SK-N-SH (cell line): ENCODE measurements at regions of chr5 and their contacts with region 1.

Region 1: DNA sequence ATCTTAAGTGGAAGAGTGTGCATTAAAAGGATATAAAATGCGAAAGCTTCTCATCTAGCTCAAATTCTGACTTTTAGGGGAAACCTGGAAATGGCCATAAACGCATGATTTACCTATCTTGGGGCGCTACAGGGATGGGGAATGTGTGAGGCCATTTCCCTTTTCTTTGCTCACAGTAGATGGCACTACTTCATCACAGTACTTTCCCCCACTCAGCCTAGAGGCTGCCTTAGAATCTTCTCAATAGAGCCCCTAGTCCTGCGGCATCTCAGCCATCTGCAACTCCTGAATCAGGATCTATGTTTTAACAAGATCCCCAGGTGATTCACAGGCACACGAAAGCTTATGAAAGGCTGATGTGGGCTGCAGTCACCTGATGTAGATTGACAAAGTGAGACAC is 110.8 kb downstream of the LHFPL2 start:
- DNase-seq: peak; percentile 58
- H3K4me3 ChIP-seq: no peak overlapping the region
- H3K27ac ChIP-seq: peak overlapping the region in 1 of 2 experiments; percentile 97; a peak in 1 of 4 replicates
- H3K4me1 ChIP-seq: peaks cover 7 to 33% of the 10 kb centered on the region in 2 experiments; a peak in 3 of 4 replicates
- H3K27me3 ChIP-seq: no peaks in the 10 kb centered on the region
- CTCF ChIP-seq: peak; percentile 58
- EP300 ChIP-seq: no peak
- RAD21 ChIP-seq: peak; percentile 90

Region 2: GRCh38 chr5:78490709-78491485 is 46.9 kb before region 1 on chr5:
- CTCF ChIA-PET with region 1: interaction called, 10 read pairs
- POLR2A ChIA-PET with region 1: no interaction called
- DNase-seq: no peak
- H3K4me3 ChIP-seq: no peak overlapping the region
- H3K27ac ChIP-seq: peak overlapping the region; percentile 43 to 59
- H3K4me1 ChIP-seq: peaks cover 0 to 14% of the 10 kb centered on the region in 2 experiments; a peak in 1 of 4 replicates
- H3K27me3 ChIP-seq: no peaks in the 10 kb centered on the region
- CTCF ChIP-seq: no peak
- EP300 ChIP-seq: 0 out of 4 replicates have a peak, but pooled peaks of 1 of the 2 experiments have one; percentile 31
- RAD21 ChIP-seq: no peak

Region 3: DNA sequence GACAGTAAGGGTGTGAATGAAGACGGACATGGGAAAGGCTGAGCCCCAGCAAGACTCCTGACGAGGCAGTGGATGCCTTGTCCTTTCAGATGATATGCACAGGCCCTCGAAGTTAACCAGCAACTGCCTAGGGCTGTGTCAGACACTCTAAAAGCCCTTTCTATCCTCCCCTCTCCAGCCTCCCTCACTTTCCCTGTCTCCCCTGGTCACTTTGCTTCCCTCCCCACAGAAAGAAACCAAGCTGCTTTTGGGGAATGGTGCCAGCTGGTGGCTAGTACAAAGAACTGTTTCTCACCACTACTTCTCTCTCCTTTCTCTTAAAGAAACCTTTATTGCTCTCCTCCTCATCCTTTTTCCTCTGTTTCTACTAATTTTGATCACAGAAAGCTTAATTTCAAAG is 89.4 kb after region 1 on chr5:
- CTCF ChIA-PET with region 1: interaction called, 32 read pairs
- POLR2A ChIA-PET with region 1: no interaction called
- DNase-seq: no peak
- H3K4me3 ChIP-seq: no peak overlapping the region
- H3K27ac ChIP-seq: peak overlapping the region; percentile 35 to 56; a peak in 3 of 4 replicates
- H3K4me1 ChIP-seq: peaks cover 23 to 42% of the 10 kb centered on the region in 2 experiments
- H3K27me3 ChIP-seq: no peaks in the 10 kb centered on the region
- CTCF ChIP-seq: peak; percentile 49
- EP300 ChIP-seq: no peak
- RAD21 ChIP-seq: peak; percentile 68

Region 4: GRCh38 chr5:78648359-78649210 is 110.8 kb after region 1 on chr5 and contains the start of gene LHFPL2:
- CTCF ChIA-PET with region 1: interaction called, 23 read pairs
- POLR2A ChIA-PET with region 1: no interaction called
- DNase-seq: peak; percentile 95
- H3K4me3 ChIP-seq: peak within 1 kb of the TSS; percentile 89 to 90
- H3K27ac ChIP-seq: peak within 1 kb of the TSS; percentile 92 to 93
- H3K4me1 ChIP-seq: peaks cover 11 to 26% of the 10 kb centered on the region in 2 experiments
- H3K27me3 ChIP-seq: no peaks in the 10 kb centered on the region
- CTCF ChIP-seq: no peak
- EP300 ChIP-seq: no peak
- RAD21 ChIP-seq: peak; percentile 14; the same call in 1 of the 2 replicates
- polyA plus RNA-seq, gene LHFPL2: 8.6 and 10.4 TPM in 2 replicates

Region 5: GRCh38 chr5:78920604-78921003 is 382.8 kb after region 1 on chr5:
- CTCF ChIA-PET with region 1: interaction called, 15 read pairs
- POLR2A ChIA-PET with region 1: no interaction called
- DNase-seq: peak; percentile 37
- H3K4me3 ChIP-seq: no peak overlapping the region
- H3K27ac ChIP-seq: no peak overlapping the region
- H3K4me1 ChIP-seq: peaks cover 0 to 7% of the 10 kb centered on the region in 2 experiments; a peak in 1 of 4 replicates
- H3K27me3 ChIP-seq: no peaks in the 10 kb centered on the region
- CTCF ChIP-seq: peak; percentile 49
- EP300 ChIP-seq: no peak
- RAD21 ChIP-seq: peak; percentile 86

Region 6: GRCh38 chr5:78972654-78973428 is 435.0 kb after region 1 on chr5:
- CTCF ChIA-PET with region 1: interaction called, 61 read pairs
- POLR2A ChIA-PET with region 1: no interaction called
- DNase-seq: peak; percentile 62
- H3K4me3 ChIP-seq: no peak overlapping the region
- H3K27ac ChIP-seq: peak overlapping the region; percentile 27 to 87; a peak in 3 of 4 replicates
- H3K4me1 ChIP-seq: peaks cover 0 to 33% of the 10 kb centered on the region in 2 experiments; a peak in 2 of 4 replicates
- H3K27me3 ChIP-seq: no peaks in the 10 kb centered on the region
- CTCF ChIP-seq: no peak
- EP300 ChIP-seq: peak; percentile 21 to 94; a peak in 3 of 4 replicates
- RAD21 ChIP-seq: no peak; the same call in 1 of the 2 replicates